Dendritic cell treated with granulocyte-macrophage colony-stimulating factor and Interleukin-4, amounts not matched to agents 40 ng/mL and 50 ng/mL, for 4 days (primary cell): ENCODE measurements at regions of chr5 and their contacts with region 1.

Region 1: GRCh38 chr5:58582803-58583491 is at the start of gene RAB3C:
- H3K4me3 Mint-ChIP-seq: peak within 1 kb of the TSS; percentile 92
- H3K27ac Mint-ChIP-seq: no peak within 1 kb of the TSS
- H3K4me1 Mint-ChIP-seq: peaks cover 23% of the 10 kb centered on the region
- H3K27me3 Mint-ChIP-seq: peaks cover 40% of the 10 kb centered on the region

Region 2: GRCh38 chr5:58318468-58318867 is 264.5 kb before region 1 on chr5:
- intact Hi-C with region 1: no loop called
- H3K4me3 Mint-ChIP-seq: no peak overlapping the region
- H3K27ac Mint-ChIP-seq: no peak overlapping the region
- H3K4me1 Mint-ChIP-seq: no peaks in the 10 kb centered on the region
- H3K27me3 Mint-ChIP-seq: no peaks in the 10 kb centered on the region

Region 3: DNA sequence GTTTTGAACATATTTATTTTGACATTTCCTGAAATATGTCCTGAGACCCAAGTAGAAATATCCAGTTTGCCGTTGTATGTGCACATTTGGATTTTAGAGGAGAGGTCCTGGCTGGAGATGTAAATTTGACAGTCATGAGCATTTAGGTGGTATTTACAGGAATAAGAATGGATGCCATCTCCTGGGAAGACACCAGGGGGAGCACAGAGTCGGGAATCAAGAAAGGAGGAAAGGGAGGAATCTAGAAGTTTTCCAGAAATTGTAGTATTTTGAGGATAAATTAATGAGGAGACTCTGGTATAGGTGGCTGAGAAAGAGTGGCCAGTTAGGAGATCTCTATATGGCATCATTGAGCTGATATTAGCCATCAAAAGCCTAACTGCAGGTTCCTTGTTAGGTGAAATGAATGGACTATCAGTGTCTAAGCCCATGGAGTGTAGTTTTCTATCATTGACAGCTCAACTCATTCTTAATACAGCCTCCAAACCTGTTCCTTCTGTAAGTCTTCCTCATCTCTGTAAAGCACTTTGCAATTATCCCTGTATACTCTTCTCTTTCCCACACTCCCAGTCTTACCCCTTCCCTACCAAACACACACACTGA is 84.5 kb before region 1 on chr5:
- intact Hi-C with region 1: loop called (anchors 5 kb)
- H3K4me3 Mint-ChIP-seq: no peak overlapping the region
- H3K27ac Mint-ChIP-seq: no peak overlapping the region
- H3K4me1 Mint-ChIP-seq: peaks cover 57% of the 10 kb centered on the region
- H3K27me3 Mint-ChIP-seq: no peaks in the 10 kb centered on the region

Region 4: DNA sequence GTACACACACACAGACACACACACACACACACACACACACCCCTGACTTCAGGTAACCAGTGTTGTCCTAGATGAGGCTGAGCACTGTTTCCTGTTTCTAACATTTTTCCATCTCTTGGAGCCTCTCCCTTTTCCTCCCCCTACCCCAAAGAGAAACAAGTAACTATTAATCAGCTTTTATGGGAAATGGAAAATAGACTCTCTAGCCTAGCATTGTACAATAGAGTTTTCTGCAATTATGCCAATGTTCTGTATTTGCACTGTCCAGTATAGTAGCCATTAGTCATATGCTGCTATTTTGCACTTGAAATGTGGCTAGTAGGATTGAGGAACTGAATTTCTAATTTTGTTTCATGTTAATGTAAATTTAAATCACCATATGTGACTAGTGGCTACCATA is 33.0 kb after region 1 on chr5:
- intact Hi-C with region 1: no loop called
- H3K4me3 Mint-ChIP-seq: no peak overlapping the region
- H3K27ac Mint-ChIP-seq: no peak overlapping the region
- H3K4me1 Mint-ChIP-seq: peaks cover 4% of the 10 kb centered on the region
- H3K27me3 Mint-ChIP-seq: no peaks in the 10 kb centered on the region